Panc1 (cell line): ENCODE measurements at regions of chr1 and their contacts with region 1.

Region 1: DNA sequence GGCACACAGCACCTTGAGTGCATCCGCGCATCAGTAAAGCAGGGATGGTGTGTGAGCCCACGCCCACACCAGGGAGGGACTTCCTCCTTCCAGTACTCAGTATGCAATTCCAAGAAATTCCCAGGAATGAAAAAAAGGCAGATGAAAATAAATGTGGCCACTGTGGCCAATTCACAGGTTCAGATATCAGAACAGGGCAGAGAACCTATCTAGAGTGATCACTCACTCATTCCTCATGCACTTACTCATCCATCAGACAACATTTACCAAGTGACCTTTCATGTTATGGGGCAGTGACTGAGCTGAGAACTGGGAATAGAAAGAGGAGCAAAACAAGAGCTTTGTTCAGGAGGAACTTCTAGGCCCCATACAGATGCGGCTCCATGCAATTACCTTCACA is 113.7 kb downstream of the ZSCAN20 start:
- DNase-seq: peak; percentile 12
- ATAC-seq: peak; percentile 48; the same call in 1 of the 2 replicates
- H3K4me3 ChIP-seq: no peak overlapping the region
- H3K27ac ChIP-seq: no peak overlapping the region
- H3K4me1 ChIP-seq: no peaks in the 10 kb centered on the region
- H3K27me3 ChIP-seq: peaks cover 7% of the 10 kb centered on the region
- CTCF ChIP-seq: no peak

Region 2: DNA sequence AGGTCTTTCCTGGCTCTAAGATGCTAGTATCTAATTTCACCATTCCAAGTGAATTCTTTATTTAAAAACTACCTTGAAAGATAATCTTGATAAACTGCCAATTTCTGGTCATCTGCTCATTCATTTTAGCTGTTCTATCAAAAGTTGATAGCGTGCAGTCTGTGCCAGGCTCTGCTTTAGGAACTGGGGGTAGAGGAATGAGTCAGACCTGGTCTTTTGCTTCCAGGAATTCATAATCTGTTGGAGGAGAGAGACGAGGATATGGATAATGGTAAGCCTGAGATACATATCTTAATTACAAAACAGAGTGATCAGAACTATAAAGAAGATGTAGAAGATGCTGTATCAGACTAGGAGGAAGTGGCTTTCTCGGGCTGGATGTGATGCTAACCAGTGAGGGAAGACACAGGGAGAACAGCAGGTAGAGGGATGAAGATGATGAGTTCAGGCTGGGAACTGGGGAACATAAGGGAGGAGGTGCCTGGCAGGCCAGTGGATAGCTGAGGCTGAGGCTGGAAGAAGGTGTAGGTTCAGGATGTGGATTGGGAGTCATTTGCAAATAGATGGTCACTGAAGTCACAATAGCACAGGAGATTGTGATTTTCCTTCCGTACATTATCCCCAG is 142.9 kb before region 1 on chr1:
- CTCF ChIA-PET with region 1: no interaction called
- POLR2A ChIA-PET with region 1: no interaction called
- in situ Hi-C with region 1: no loop called
- intact Hi-C with region 1: no loop called
- DNase-seq: no peak
- ATAC-seq: no peak; the same call in 1 of the 2 replicates
- H3K4me3 ChIP-seq: no peak overlapping the region
- H3K27ac ChIP-seq: no peak overlapping the region
- H3K4me1 ChIP-seq: no peaks in the 10 kb centered on the region
- H3K27me3 ChIP-seq: no peaks in the 10 kb centered on the region
- CTCF ChIP-seq: no peak

Region 3: GRCh38 chr1:33575324-33575879 is 10.7 kb before region 1 on chr1:
- CTCF ChIA-PET with region 1: no interaction called
- POLR2A ChIA-PET with region 1: interaction called, 10 read pairs
- in situ Hi-C with region 1: no loop called
- intact Hi-C with region 1: no loop called
- DNase-seq: no peak
- ATAC-seq: no peak
- H3K4me3 ChIP-seq: no peak overlapping the region
- H3K27ac ChIP-seq: no peak overlapping the region
- H3K4me1 ChIP-seq: no peaks in the 10 kb centered on the region
- H3K27me3 ChIP-seq: peaks cover 19% of the 10 kb centered on the region
- CTCF ChIP-seq: no peak

Region 4: DNA sequence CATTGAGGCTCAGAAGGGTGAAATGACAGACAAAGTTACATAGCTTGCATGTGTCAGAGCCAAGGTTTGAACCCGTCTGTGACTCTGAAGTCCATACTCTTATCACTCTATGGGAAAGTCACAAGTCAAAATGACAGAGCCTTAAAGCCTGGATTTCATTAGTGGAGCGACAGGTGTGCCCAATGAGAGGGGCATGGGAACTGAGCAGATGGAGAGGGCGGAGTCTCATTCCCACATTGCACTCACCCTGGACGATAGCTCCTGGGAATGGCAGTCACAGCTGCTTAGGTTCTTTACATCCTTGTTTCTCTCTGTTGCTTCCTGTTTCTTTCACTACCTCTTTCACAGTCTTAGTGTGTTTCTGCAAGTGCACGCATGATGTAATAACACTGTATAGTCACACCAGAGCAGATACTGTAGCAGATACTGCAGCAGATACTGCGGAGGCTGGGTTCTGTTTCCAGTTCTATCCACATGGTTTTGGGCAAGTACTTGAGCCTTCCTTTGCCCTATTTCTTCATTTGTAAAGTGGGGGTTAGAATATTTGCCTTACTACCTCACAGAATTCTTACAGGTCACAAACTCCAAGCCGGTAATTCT is 13.5 kb after region 1 on chr1:
- CTCF ChIA-PET with region 1: interaction called, 6 read pairs
- POLR2A ChIA-PET with region 1: interaction called, 15 read pairs
- in situ Hi-C with region 1: no loop called
- intact Hi-C with region 1: no loop called
- DNase-seq: no peak
- ATAC-seq: no peak
- H3K4me3 ChIP-seq: no peak overlapping the region
- H3K27ac ChIP-seq: no peak overlapping the region
- H3K4me1 ChIP-seq: no peaks in the 10 kb centered on the region
- H3K27me3 ChIP-seq: peaks cover 16% of the 10 kb centered on the region
- CTCF ChIP-seq: no peak

Region 5: GRCh38 chr1:33692206-33693188 is 106.4 kb after region 1 on chr1:
- CTCF ChIA-PET with region 1: no interaction called
- POLR2A ChIA-PET with region 1: no interaction called
- in situ Hi-C with region 1: no loop called
- intact Hi-C with region 1: no loop called
- DNase-seq: no peak
- ATAC-seq: no peak
- H3K4me3 ChIP-seq: no peak overlapping the region
- H3K27ac ChIP-seq: no peak overlapping the region
- H3K4me1 ChIP-seq: no peaks in the 10 kb centered on the region
- H3K27me3 ChIP-seq: peaks cover 3% of the 10 kb centered on the region
- CTCF ChIP-seq: no peak